ENCODE measurements at regions of chr9 and their contacts with region 1.

Region 1: GRCh38 chr9:19161257-19162025 is 34.1 kb upstream of the PLIN2 start:
- DNase-seq: peak; percentile 72 to 77
- ATAC-seq: peak; percentile 93 to 97
- H3K4me3 ChIP-seq: no peak overlapping the region
- H3K27ac ChIP-seq: peak overlapping the region; percentile 72 to 90 (median 88)
- H3K4me1 ChIP-seq: peaks cover 15 to 18% of the 10 kb centered on the region in 2 donors
- H3K27me3 ChIP-seq: no peaks in the 10 kb centered on the region
- CTCF ChIP-seq: no peak
- POLR2A ChIP-seq: no peak

Region 2: DNA sequence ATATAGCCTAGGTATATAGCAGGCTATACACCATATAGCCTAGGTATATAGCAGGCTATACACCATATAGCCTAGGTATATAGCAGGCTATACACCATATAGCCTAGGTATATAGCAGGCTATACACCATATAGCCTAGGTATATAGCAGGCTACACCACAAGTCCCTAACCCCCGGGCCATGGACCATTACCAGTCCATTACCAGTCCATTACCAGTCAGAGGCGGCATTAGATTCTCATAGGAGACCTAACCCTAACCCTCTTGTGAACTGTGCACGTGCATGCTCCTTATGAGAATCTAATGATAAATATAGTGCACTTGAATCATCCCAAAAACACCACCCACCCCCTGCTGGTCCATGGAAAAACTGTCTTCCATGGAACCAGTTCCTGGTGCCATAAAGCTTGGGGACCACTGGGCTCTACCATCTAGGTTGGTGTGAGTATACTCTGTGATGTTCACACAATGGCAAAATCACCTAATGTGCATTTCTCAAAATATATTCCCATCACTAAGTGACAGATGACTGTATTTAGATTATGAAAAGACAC is 38.9 kb before region 1 on chr9:
- in situ Hi-C with region 1: no loop called
- intact Hi-C with region 1: loop called (anchors 1 kb)
- DNase-seq: no peak
- ATAC-seq: no peak
- H3K4me3 ChIP-seq: peak overlapping the region in 1 of 4 donors; percentile 84
- H3K27ac ChIP-seq: peak overlapping the region; percentile 95 to 98 (median 96)
- H3K4me1 ChIP-seq: peaks cover 61 to 64% of the 10 kb centered on the region in 2 donors
- H3K27me3 ChIP-seq: no peaks in the 10 kb centered on the region
- CTCF ChIP-seq: peak in 2 of 5 experiments; percentile 17 to 20
- POLR2A ChIP-seq: peak in 1 of 2 donors; percentile 9

Measured in gastrocnemius medialis (tissue), 4 donors.